ENCODE measurements at regions of chr11 and their contacts with region 1.

Region 1: GRCh38 chr11:117107701-117108590 is 9.7 kb upstream of the SIK3 start:
- DNase-seq: no peak
- ATAC-seq: no peak
- H3K4me3 ChIP-seq: no peak overlapping the region
- H3K27ac ChIP-seq: no peak overlapping the region
- H3K4me1 ChIP-seq: no peaks in the 10 kb centered on the region
- H3K27me3 ChIP-seq: no peaks in the 10 kb centered on the region
- CTCF ChIP-seq: no peak

Region 2: DNA sequence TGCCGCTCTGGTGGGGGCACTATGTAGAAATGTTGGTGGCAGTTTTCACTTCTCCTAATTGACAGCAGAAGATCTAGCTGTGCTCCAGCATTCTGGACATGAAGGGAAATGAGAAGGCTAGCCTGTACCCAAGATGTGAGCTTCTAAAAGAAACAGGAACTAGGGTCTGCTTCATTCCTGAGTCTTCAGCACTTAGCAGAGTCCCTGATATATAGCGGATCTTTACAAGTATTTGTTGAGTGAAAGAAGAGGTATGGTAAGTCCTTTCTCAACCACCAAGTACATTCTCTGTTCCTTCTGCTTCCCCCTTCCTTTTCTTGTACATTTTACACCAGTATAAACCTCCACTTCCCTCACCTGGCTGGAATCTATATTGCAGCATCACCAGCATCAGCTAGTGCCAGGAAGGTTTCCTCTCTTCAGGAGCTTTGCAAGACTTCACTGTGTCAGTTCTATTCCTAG is 1195.4 kb before region 1 on chr11:
- CTCF ChIA-PET with region 1: interaction called, 11 read pairs
- POLR2A ChIA-PET with region 1: no interaction called
- in situ Hi-C with region 1: no loop called
- intact Hi-C with region 1: no loop called
- DNase-seq: no peak
- ATAC-seq: peak; percentile 58; the same call in 1 of the 2 replicates
- H3K4me3 ChIP-seq: no peak overlapping the region
- H3K27ac ChIP-seq: no peak overlapping the region
- H3K4me1 ChIP-seq: no peaks in the 10 kb centered on the region
- H3K27me3 ChIP-seq: 0 out of 2 replicates have a peak, but pooled peaks cover 2% of the 10 kb centered on the region
- CTCF ChIP-seq: peak; percentile 45

Region 3: DNA sequence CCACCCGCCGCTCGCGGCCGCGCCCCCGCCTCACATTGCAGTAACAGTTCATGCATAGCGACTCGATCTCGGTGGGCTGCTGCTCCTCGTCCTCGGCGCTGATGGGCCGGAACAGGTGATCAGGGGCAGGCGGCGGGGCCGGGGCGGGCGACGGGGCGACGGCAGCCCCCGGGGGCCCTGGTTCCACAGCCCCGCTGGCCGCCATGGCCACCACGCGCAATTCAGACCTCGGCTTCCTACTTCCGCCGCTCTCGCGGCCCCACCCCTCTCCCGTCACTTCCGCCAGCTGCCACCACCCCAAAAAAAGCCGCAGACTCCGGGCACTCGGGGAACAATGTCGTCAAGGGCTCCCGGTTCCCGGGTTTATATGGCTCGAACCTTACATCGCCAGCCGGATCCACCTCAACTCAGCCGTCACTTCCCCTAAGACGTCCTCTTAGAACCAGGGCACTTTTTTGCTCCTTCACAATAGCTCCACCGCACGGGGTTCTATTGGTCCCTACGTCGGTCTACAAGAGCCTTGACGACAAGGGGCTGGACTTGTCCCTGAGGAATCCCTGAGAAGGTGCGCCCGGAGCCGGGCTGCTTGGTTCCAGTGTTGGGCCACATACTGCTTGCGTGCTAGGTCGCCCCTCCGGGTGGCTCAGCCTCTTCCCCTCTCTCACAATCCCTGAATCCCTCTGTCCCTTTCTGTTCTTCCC is 320.0 kb before region 1 on chr11 and contains the start of gene ZPR1:
- CTCF ChIA-PET with region 1: interaction called, 5 read pairs
- POLR2A ChIA-PET with region 1: interaction called, 5 read pairs
- in situ Hi-C with region 1: no loop called
- intact Hi-C with region 1: loop called (anchors 1 kb)
- DNase-seq: no peak
- ATAC-seq: peak; percentile 94
- H3K4me3 ChIP-seq: peak within 1 kb of the TSS; percentile 86 to 97
- H3K27ac ChIP-seq: peak within 1 kb of the TSS; percentile 95
- H3K4me1 ChIP-seq: peaks cover 15% of the 10 kb centered on the region
- H3K27me3 ChIP-seq: no peaks in the 10 kb centered on the region
- CTCF ChIP-seq: no peak
- total RNA-seq, gene ZPR1: 139 TPM

Region 4: GRCh38 chr11:116879800-116880625 is 227.9 kb before region 1 on chr11:
- CTCF ChIA-PET with region 1: no interaction called
- POLR2A ChIA-PET with region 1: no interaction called
- in situ Hi-C with region 1: no loop called
- intact Hi-C with region 1: loop called (anchors 1 kb)
- DNase-seq: peak; percentile 66
- ATAC-seq: peak; percentile 97
- H3K4me3 ChIP-seq: no peak overlapping the region
- H3K27ac ChIP-seq: no peak overlapping the region
- H3K4me1 ChIP-seq: no peaks in the 10 kb centered on the region
- H3K27me3 ChIP-seq: no peaks in the 10 kb centered on the region
- CTCF ChIP-seq: peak; percentile 79; the same call in 1 of the 2 replicates

Region 5: GRCh38 chr11:117226388-117227385 is 118.7 kb after region 1 on chr11:
- CTCF ChIA-PET with region 1: interaction called, 12 read pairs
- POLR2A ChIA-PET with region 1: interaction called, 5 read pairs
- in situ Hi-C with region 1: no loop called
- intact Hi-C with region 1: no loop called
- DNase-seq: peak; percentile 43
- ATAC-seq: peak; percentile 93
- H3K4me3 ChIP-seq: no peak overlapping the region
- H3K27ac ChIP-seq: no peak overlapping the region
- H3K4me1 ChIP-seq: peaks cover 12% of the 10 kb centered on the region
- H3K27me3 ChIP-seq: no peaks in the 10 kb centered on the region
- CTCF ChIP-seq: peak; percentile 94